Sigmoid colon (tissue), 7 donors: ENCODE measurements at regions of chr4 and their contacts with region 1.

Region 1: DNA sequence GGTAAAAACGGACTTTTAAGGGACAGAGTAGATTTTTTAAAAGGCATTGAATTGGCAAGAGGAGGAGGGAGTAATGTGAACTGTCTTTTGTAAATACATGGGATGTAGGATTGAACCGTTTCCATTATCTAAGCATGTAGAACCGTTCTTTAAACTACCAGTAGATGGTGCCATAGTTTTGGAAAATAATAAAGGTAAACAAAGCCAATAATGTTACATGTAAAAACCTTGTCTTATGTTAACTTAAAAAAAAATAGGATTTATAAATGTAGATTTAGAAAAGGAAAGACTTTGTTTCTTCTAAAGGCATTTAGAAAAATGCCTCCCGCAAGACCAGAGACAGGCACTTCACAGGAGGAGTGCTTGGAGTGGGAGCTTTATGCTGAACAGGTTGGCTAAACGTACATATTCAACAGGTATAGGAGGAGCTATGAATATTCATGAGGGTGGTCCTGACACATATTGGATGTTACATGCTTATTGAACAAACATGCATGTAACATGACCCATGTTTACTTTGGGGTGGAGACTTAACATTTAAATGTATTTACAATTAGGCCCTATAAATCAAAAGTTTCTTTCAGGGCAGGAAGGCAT is 45.5 kb upstream of the FAM241A start:
- DNase-seq: no peak
- H3K4me3 ChIP-seq: no peak overlapping the region
- H3K27ac ChIP-seq: no peak overlapping the region
- H3K4me1 ChIP-seq: no peaks in the 10 kb centered on the region
- H3K27me3 ChIP-seq: no peaks in the 10 kb centered on the region
- CTCF ChIP-seq: peak; percentile 29 to 64 (median 44)
- EP300 ChIP-seq: no peak
- POLR2A ChIP-seq: no peak

Region 2: DNA sequence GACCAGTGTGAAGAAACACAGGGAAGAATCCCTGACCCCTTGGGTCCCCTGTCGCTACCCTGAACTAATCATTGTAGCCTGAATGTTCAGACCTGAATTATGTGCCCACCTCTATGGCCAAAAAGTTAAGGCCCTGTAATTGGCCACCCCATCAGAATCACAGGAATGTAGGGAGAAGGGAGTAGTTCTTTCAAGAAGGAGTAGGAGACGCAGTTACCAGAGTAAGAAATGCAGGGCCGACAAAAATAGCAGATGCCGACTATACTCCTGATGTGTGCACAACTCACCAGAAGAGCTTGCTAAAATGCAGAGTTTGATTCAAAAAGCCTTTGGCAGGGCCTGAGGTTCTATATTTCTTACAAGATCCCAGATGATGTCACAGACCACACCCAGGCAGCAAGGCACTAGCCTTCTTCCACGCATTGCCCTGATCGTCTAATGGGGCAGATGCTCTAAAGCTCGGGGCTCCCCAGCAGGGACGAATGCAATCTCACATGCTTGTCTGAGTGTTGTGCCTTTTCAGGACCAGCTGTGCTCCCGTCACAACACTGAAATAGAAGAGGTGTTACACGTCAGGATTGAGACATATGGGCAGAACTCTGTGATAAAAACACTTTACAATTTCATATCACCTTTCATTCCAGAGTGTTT is 115.5 kb before region 1 on chr4:
- intact Hi-C with region 1: no loop called
- DNase-seq: no peak
- H3K4me3 ChIP-seq: no peak overlapping the region
- H3K27ac ChIP-seq: no peak overlapping the region
- H3K4me1 ChIP-seq: no peaks in the 10 kb centered on the region
- H3K27me3 ChIP-seq: peaks cover 0 to 7% (median 0%) of the 10 kb centered on the region in 3 donors
- CTCF ChIP-seq: no peak
- EP300 ChIP-seq: no peak
- POLR2A ChIP-seq: no peak

Region 3: DNA sequence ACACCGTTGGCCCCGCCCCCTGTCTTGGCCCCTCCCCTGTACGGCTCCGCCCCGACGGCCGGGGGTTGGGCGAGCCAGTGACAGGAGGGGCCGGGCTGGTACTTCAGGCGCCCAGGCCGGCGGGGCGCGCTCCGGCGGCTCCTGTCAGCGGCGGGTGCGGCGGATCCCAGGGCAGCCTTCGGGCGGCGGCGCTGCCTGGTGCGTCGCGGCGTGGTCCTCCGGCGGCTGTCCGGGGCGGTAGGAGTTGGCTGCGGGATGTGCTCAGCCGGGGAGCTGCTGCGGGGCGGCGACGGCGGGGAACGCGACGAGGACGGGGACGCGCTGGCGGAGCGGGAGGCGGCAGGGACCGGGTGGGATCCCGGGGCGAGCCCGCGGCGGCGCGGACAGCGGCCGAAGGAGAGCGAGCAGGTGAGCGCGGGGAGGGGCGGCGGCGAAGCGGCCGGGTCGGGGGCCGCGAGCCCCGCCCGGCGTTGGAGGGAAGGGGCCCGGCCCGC is 45.6 kb after region 1 on chr4 and contains the start of gene FAM241A:
- intact Hi-C with region 1: loop called (anchors 5 kb)
- DNase-seq: peak; percentile 94
- H3K4me3 ChIP-seq: peak within 1 kb of the TSS; percentile 77 to 96 (median 92)
- H3K27ac ChIP-seq: peak within 1 kb of the TSS; percentile 90 to 93 (median 91)
- H3K4me1 ChIP-seq: peaks cover 0 to 12% (median 5%) of the 10 kb centered on the region in 4 donors
- H3K27me3 ChIP-seq: no peaks in the 10 kb centered on the region
- CTCF ChIP-seq: no peak
- EP300 ChIP-seq: no peak
- POLR2A ChIP-seq: peak in 1 of 2 donors; percentile 22
- total RNA-seq, gene FAM241A: 2.8 to 3.7 (median 2.9) TPM